ENCODE measurements at regions of chr22 and their contacts with region 1.

Region 1: GRCh38 chr22:39382414-39382813 is 17.2 kb upstream of the TAB1 start:
- DNase-seq: no peak
- ATAC-seq: no peak
- H3K4me3 ChIP-seq: no peak overlapping the region
- H3K4me3 Mint-ChIP-seq: no peak overlapping the region
- H3K27ac ChIP-seq: no peak overlapping the region
- H3K27ac Mint-ChIP-seq: peak overlapping the region; percentile 50
- H3K4me1 ChIP-seq: peaks cover 0 to 8% of the 10 kb centered on the region in 2 donors
- H3K4me1 Mint-ChIP-seq: peaks cover 16% of the 10 kb centered on the region
- H3K27me3 ChIP-seq: no peaks in the 10 kb centered on the region
- H3K27me3 Mint-ChIP-seq: no peaks in the 10 kb centered on the region
- CTCF ChIP-seq: no peak

Region 2: GRCh38 chr22:38923463-38924346 is 458.7 kb before region 1 on chr22:
- CTCF ChIA-PET with region 1: no interaction called
- POLR2A ChIA-PET with region 1: no interaction called
- intact Hi-C with region 1: no loop called
- DNase-seq: no peak
- ATAC-seq: no peak
- H3K4me3 ChIP-seq: no peak overlapping the region
- H3K4me3 Mint-ChIP-seq: no peak overlapping the region
- H3K27ac ChIP-seq: no peak overlapping the region
- H3K27ac Mint-ChIP-seq: no peak overlapping the region
- H3K4me1 ChIP-seq: peaks cover 3% of the 10 kb centered on the region in 2 donors
- H3K4me1 Mint-ChIP-seq: peaks cover 4% of the 10 kb centered on the region
- H3K27me3 ChIP-seq: peaks cover 0 to 34% (median 15%) of the 10 kb centered on the region in 4 experiments
- H3K27me3 Mint-ChIP-seq: peaks cover 53% of the 10 kb centered on the region
- CTCF ChIP-seq: no peak

Region 3: GRCh38 chr22:39332441-39333064 is 49.9 kb before region 1 on chr22:
- CTCF ChIA-PET with region 1: no interaction called
- POLR2A ChIA-PET with region 1: interaction called, 12 read pairs
- intact Hi-C with region 1: no loop called
- DNase-seq: no peak
- ATAC-seq: no peak
- H3K4me3 ChIP-seq: no peak overlapping the region
- H3K4me3 Mint-ChIP-seq: no peak overlapping the region
- H3K27ac ChIP-seq: no peak overlapping the region
- H3K27ac Mint-ChIP-seq: no peak overlapping the region
- H3K4me1 ChIP-seq: no peaks in the 10 kb centered on the region
- H3K4me1 Mint-ChIP-seq: no peaks in the 10 kb centered on the region
- H3K27me3 ChIP-seq: no peaks in the 10 kb centered on the region
- H3K27me3 Mint-ChIP-seq: no peaks in the 10 kb centered on the region
- CTCF ChIP-seq: no peak

Region 4: DNA sequence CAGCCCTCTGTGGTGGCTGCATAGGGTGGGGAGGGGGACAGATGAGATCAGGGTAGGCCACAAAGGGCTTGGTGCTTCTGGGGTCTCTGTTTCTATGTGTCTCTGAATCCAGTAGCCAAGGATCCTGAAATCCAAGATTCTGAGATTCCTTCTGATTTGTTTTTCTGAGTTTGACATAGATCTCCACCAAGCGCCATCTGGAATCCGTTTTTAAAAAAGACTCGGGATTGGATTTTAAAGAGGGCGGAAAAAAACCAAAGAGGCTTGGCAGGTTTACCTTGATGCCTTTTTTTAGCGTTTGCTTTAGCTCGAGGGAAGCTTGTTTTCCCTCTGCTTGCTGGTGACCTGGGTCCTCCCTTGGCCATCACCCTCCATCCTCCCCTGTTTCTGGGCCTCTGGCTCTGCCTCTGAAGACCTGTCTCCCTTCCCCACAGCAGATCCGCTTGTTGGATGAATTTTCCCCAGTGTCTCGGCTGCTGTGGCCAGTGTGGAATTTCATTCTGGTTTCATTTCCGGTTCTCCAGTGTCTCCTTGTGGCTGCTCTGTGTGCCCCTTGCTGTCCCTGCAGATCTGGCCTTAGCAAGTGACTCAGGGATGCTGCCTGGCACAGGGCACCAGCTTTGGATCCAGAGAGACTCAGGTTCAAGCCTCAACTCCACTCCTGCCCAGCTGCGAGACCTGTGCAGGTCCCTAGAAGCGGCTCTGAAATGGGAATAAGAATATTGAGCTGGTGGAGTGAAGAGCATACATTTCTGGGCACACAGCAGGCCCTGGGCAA is 17.5 kb before region 1 on chr22:
- CTCF ChIA-PET with region 1: no interaction called
- POLR2A ChIA-PET with region 1: interaction called, 13 read pairs
- intact Hi-C with region 1: no loop called
- DNase-seq: no peak
- ATAC-seq: no peak
- H3K4me3 ChIP-seq: no peak overlapping the region
- H3K4me3 Mint-ChIP-seq: no peak overlapping the region
- H3K27ac ChIP-seq: no peak overlapping the region
- H3K27ac Mint-ChIP-seq: no peak overlapping the region
- H3K4me1 ChIP-seq: peaks cover 17 to 25% of the 10 kb centered on the region in 2 donors
- H3K4me1 Mint-ChIP-seq: peaks cover 51% of the 10 kb centered on the region
- H3K27me3 ChIP-seq: no peaks in the 10 kb centered on the region
- H3K27me3 Mint-ChIP-seq: no peaks in the 10 kb centered on the region
- CTCF ChIP-seq: no peak

Region 5: GRCh38 chr22:39434721-39435120 is 52.3 kb after region 1 on chr22:
- CTCF ChIA-PET with region 1: no interaction called
- POLR2A ChIA-PET with region 1: no interaction called
- intact Hi-C with region 1: no loop called
- DNase-seq: no peak
- ATAC-seq: no peak
- H3K4me3 ChIP-seq: no peak overlapping the region
- H3K4me3 Mint-ChIP-seq: no peak overlapping the region
- H3K27ac ChIP-seq: no peak overlapping the region
- H3K27ac Mint-ChIP-seq: no peak overlapping the region
- H3K4me1 ChIP-seq: peaks cover 12 to 23% of the 10 kb centered on the region in 2 donors
- H3K4me1 Mint-ChIP-seq: peaks cover 20% of the 10 kb centered on the region
- H3K27me3 ChIP-seq: peaks cover 0 to 5% (median 0%) of the 10 kb centered on the region in 4 experiments
- H3K27me3 Mint-ChIP-seq: no peaks in the 10 kb centered on the region
- CTCF ChIP-seq: no peak

Region 6: DNA sequence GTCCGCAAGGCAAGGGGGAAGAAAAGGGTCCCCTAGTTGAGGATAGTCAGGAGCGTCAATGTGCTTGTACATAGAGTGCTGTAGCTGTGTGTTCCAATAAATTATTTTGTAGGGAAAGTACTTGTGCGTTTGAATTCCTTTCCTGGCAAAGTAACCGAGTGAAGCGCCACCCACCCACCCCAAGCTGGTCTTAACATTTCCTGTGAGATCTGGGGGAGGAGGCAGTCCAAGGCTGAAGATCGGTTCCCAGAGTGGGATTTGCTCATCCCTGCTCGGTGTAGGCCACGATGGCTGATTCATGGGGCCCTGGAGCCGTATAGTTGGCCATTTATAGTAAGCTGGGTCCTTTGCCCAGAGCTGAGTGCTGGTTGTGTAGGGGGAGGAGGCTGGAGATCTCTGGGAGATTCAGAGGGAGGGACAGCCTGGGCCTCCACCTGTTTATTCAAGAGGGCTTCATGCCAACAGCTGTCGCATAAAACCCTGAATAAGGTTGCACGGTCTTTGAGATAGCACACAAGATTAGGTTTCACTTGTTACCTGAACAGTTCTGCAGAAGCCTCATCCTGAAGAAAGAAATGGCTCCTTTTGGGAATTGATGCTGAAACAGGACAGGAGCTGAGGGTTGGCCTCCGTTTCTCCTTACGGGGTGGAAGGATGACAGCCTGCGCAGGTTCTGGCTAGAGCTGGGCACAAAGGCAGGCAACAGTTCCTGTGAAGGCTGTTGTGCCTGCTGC is 140.3 kb after region 1 on chr22:
- CTCF ChIA-PET with region 1: no interaction called
- POLR2A ChIA-PET with region 1: no interaction called
- intact Hi-C with region 1: no loop called
- DNase-seq: peak; percentile 41
- ATAC-seq: no peak
- H3K4me3 ChIP-seq: peak overlapping the region in 2 of 5 experiments; percentile 7 to 18
- H3K4me3 Mint-ChIP-seq: peak overlapping the region; percentile 94
- H3K27ac ChIP-seq: peak overlapping the region; percentile 6 to 17
- H3K27ac Mint-ChIP-seq: peak overlapping the region; percentile 98
- H3K4me1 ChIP-seq: peaks cover 43 to 68% of the 10 kb centered on the region in 2 donors
- H3K4me1 Mint-ChIP-seq: peaks cover 69% of the 10 kb centered on the region
- H3K27me3 ChIP-seq: no peaks in the 10 kb centered on the region
- H3K27me3 Mint-ChIP-seq: no peaks in the 10 kb centered on the region
- CTCF ChIP-seq: no peak

Region 7: GRCh38 chr22:39601180-39601535 is 218.7 kb after region 1 on chr22:
- CTCF ChIA-PET with region 1: no interaction called
- POLR2A ChIA-PET with region 1: interaction called, 10 read pairs
- intact Hi-C with region 1: no loop called
- DNase-seq: no peak
- ATAC-seq: peak; percentile 57
- H3K4me3 ChIP-seq: no peak overlapping the region
- H3K4me3 Mint-ChIP-seq: peak overlapping the region; percentile 72
- H3K27ac ChIP-seq: peak overlapping the region; percentile 0 to 30
- H3K27ac Mint-ChIP-seq: peak overlapping the region; percentile 98
- H3K4me1 ChIP-seq: peaks cover 17 to 26% of the 10 kb centered on the region in 2 donors
- H3K4me1 Mint-ChIP-seq: peaks cover 31% of the 10 kb centered on the region
- H3K27me3 ChIP-seq: peaks cover 0 to 38% (median 12%) of the 10 kb centered on the region in 4 experiments
- H3K27me3 Mint-ChIP-seq: peaks cover 35% of the 10 kb centered on the region
- CTCF ChIP-seq: no peak